CD4-positive, alpha-beta memory T cell (primary cell): ENCODE measurements at regions of chr19 and their contacts with region 1.

Region 1: DNA sequence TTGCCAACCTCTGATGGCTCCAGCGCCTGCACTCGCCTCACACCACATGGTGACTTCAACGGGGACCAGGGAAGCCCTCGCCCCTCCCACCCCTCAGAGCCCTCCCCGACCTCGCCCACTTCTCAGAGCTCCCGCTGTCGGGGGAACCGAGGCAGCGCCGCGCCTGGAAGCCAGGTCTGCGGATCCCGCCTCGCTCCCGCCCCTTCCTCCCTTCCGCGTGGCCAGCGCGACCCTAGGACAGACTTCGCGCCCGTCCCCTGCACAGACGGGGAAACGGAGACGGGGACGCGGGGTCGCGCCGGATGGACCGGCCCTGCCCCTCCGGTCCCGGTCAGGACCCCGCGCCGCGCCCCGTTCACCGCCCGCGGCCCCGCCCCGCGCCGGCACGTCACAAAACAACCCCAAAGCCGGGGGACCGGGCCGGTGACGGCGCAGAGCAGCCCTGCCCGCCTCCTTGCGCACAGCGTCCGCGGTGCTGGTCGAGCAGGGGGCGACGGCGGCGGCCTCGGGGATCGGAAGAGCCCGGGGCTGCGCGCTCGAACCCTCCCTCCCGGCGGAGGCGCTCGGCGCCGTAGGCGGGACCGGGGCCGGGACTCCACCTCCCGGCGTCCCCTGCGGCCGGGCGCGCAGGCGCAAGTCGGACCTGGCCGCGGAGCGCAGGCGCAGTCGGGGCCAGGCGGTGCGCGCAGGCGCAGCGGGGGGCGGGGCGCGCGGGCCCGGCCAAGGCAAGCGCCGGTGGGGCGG is 379 bp upstream of the CDC34 start:
- DNase-seq: peak; percentile 79 to 98 (median 92)
- H3K4me3 ChIP-seq: peak overlapping the region in 1 of 2 donors; percentile 61
- H3K4me3 Mint-ChIP-seq: peak overlapping the region; percentile 79 to 87 (median 84)
- H3K27ac ChIP-seq: peak overlapping the region; percentile 81
- H3K27ac Mint-ChIP-seq: peak overlapping the region; percentile 58 to 93 (median 88)
- H3K4me1 ChIP-seq: peaks cover 27% of the 10 kb centered on the region
- H3K4me1 Mint-ChIP-seq: peaks cover 6 to 24% (median 10%) of the 10 kb centered on the region in 4 donors
- H3K27me3 ChIP-seq: no peaks in the 10 kb centered on the region
- H3K27me3 Mint-ChIP-seq: peaks cover 0 to 3% of the 10 kb centered on the region in 2 donors

Region 2: GRCh38 chr19:447816-448560 is 83.2 kb before region 1 on chr19:
- CTCF ChIA-PET with region 1: no interaction called
- POLR2A ChIA-PET with region 1: no interaction called
- intact Hi-C with region 1: no loop called
- DNase-seq: no peak
- H3K4me3 ChIP-seq: no peak overlapping the region
- H3K4me3 Mint-ChIP-seq: no peak overlapping the region
- H3K27ac ChIP-seq: no peak overlapping the region
- H3K27ac Mint-ChIP-seq: no peak overlapping the region
- H3K4me1 ChIP-seq: no peaks in the 10 kb centered on the region
- H3K4me1 Mint-ChIP-seq: no peaks in the 10 kb centered on the region
- H3K27me3 ChIP-seq: no peaks in the 10 kb centered on the region
- H3K27me3 Mint-ChIP-seq: no peaks in the 10 kb centered on the region

Region 3: DNA sequence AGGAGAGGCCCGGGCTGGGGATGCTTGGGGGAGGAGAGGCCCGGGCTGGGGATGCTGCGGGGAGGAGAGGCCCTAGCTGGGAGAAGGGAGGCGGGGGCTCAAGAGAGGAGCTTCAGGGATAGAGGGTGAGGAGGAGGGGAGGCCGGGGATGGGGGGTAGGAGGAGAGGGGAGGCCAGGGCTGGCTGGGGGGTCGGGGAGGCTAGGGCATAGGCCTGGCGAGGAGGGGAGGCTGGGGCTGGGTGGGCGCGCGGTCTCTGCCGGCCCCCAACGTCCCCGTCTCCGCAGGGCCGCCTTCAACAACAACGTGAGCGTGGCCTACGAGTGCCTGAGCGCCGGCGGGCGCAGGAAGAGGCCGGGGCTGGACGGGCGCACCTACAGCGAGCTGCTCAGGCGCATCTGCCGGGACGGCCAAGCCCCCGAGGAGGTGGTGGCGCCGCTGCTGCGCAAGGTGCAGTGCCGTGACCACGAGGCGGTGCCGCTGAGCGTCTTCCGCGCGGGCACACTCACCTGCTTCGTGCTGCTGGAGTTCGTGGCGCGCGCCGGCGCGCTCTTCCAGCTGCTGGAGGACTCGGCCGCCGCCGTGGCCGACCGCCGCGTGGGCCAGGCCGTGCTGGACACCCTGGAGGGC is 12.5 kb before region 1 on chr19:
- CTCF ChIA-PET with region 1: interaction called, 9 read pairs
- POLR2A ChIA-PET with region 1: interaction called, 14 read pairs
- intact Hi-C with region 1: no loop called
- DNase-seq: peak in 4 of 5 donors; percentile 58 to 68 (median 63)
- H3K4me3 ChIP-seq: no peak overlapping the region
- H3K4me3 Mint-ChIP-seq: peak overlapping the region in 1 of 8 donors; percentile 41
- H3K27ac ChIP-seq: no peak overlapping the region
- H3K27ac Mint-ChIP-seq: peak overlapping the region in 2 of 7 donors; percentile 18 to 43
- H3K4me1 ChIP-seq: no peaks in the 10 kb centered on the region
- H3K4me1 Mint-ChIP-seq: peaks cover 4 to 19% (median 13%) of the 10 kb centered on the region in 4 donors
- H3K27me3 ChIP-seq: no peaks in the 10 kb centered on the region
- H3K27me3 Mint-ChIP-seq: no peaks in the 10 kb centered on the region

Region 4: DNA sequence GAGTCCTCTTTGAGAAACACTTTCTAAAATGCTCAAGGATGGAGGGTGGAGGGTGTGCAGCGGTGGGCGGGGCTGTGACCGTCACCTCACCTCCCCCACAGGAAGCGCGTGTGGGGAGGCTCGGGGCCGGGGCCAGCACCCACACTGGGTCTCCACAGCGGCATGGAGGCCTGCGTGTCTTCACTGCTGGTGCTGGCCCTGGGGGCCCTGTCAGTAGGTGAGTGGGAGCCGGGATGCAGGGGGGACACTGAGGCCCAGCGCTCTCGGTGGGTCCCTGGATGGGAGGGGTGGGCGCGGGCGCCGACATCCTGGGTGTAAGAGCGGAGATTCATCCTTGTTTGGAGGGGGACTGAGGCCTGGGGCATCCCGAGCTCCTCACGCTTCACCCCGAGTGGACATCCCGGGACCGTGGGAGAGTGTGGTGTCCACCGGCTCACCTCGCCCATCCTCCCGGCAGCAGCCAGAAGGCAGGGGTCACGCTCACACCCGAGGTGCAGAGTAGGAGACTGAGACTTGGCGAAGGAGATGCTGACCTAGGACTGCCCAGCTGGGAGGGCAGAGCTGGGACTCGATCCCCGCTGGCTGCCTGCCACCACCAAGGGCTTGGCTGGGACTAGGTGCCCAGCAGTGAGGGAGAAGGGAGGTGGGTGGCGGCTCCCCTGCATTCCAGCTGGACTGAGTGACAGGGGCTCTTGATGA is 12.9 kb after region 1 on chr19 and contains the start of gene GZMM:
- CTCF ChIA-PET with region 1: interaction called, 5 read pairs
- POLR2A ChIA-PET with region 1: interaction called, 52 read pairs
- intact Hi-C with region 1: loop called (anchors 1 kb)
- DNase-seq: peak; percentile 82 to 86 (median 84)
- H3K4me3 ChIP-seq: peak within 1 kb of the TSS; percentile 61 to 72
- H3K4me3 Mint-ChIP-seq: peak within 1 kb of the TSS; percentile 81 to 94 (median 88)
- H3K27ac ChIP-seq: peak within 1 kb of the TSS; percentile 72
- H3K27ac Mint-ChIP-seq: peak within 1 kb of the TSS; percentile 85 to 95 (median 91)
- H3K4me1 ChIP-seq: peaks cover 23% of the 10 kb centered on the region
- H3K4me1 Mint-ChIP-seq: peaks cover 14 to 26% (median 18%) of the 10 kb centered on the region in 4 donors
- H3K27me3 ChIP-seq: no peaks in the 10 kb centered on the region
- H3K27me3 Mint-ChIP-seq: no peaks in the 10 kb centered on the region
- total RNA-seq, gene GZMM: 25.5 to 28.7 TPM